ENCODE measurements at regions of chr2 and their contacts with region 1.

Region 1: GRCh38 chr2:127790694-127791529 is 20.1 kb downstream of the WDR33 start:
- DNase-seq: no peak
- ATAC-seq: no peak
- H3K4me3 ChIP-seq: no peak overlapping the region
- H3K4me3 Mint-ChIP-seq: no peak overlapping the region
- H3K27ac ChIP-seq: no peak overlapping the region
- H3K27ac Mint-ChIP-seq: no peak overlapping the region
- H3K4me1 ChIP-seq: peaks cover 0 to 19% of the 10 kb centered on the region in 2 experiments
- H3K4me1 Mint-ChIP-seq: peaks cover 39 to 44% (median 40%) of the 10 kb centered on the region in 3 donors
- H3K27me3 ChIP-seq: no peaks in the 10 kb centered on the region
- H3K27me3 Mint-ChIP-seq: no peaks in the 10 kb centered on the region

Region 2: DNA sequence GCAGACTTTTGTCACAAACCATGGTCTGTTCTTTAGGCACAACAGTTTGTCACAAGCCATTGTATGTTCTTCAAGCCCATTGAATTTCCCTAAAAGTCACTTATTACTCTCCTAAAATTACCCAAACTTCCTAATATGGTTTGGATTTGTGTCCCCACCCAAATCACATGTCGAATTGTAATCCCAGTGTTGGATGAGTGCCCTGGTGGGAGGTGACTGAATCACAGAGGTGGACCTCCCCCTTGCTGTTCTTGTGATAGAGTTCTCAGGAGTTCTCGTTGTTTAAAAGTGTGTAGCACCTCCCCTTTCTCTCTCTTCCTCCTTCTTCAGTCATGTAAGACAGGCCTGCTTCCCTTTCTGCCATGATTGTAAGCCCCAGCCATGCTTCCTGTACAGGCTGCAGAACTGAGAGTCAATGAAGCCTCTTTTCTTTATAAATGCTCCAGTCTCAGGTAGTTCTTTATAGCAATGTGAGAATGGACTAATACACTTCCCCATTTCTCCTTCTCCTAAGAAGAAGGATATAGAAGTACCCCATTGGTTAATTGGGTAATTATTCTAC is 1146.2 kb before region 1 on chr2:
- CTCF ChIA-PET with region 1: no interaction called
- POLR2A ChIA-PET with region 1: no interaction called
- DNase-seq: no peak
- ATAC-seq: peak in 1 of 4 experiments; percentile 38
- H3K4me3 ChIP-seq: no peak overlapping the region
- H3K4me3 Mint-ChIP-seq: no peak overlapping the region
- H3K27ac ChIP-seq: no peak overlapping the region
- H3K27ac Mint-ChIP-seq: peak overlapping the region in 1 of 2 donors; percentile 30
- H3K4me1 ChIP-seq: no peaks in the 10 kb centered on the region
- H3K4me1 Mint-ChIP-seq: peaks cover 3 to 12% (median 7%) of the 10 kb centered on the region in 3 donors
- H3K27me3 ChIP-seq: peaks cover 0 to 5% of the 10 kb centered on the region in 2 experiments
- H3K27me3 Mint-ChIP-seq: no peaks in the 10 kb centered on the region

Region 3: DNA sequence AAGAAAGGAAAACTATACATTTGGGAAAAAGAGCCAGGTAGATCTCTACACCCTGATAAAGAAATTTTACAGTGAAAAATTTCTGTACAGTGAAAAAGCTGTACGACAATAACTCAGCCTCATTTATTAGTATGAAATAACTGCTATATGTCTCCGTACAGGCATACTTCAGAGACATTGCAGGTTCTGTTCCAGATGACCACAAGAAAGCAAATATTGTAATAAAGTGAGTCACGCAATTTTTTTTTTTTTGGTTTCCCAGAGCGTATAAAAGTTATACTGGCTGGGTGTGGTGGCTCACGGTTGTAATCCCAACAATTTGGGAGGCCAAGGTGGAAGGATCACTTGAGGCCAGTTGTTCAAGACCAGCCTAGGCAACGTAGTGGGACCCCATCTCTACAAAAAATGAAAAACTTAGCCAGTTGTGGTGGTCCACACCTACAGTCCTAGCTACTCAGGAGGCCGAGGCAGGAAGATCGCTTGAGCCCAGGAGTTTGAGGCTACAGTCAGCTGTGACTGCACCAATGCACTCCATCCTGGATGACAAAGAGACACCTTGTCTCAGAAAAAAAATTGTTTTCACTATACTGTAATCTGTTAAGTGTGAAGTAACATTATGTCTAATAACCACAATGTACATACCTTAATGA is 123.0 kb after region 1 on chr2:
- CTCF ChIA-PET with region 1: interaction called in 1 of 2 experiments, 10 read pairs
- POLR2A ChIA-PET with region 1: no interaction called
- DNase-seq: no peak
- ATAC-seq: no peak
- H3K4me3 ChIP-seq: no peak overlapping the region
- H3K4me3 Mint-ChIP-seq: no peak overlapping the region
- H3K27ac ChIP-seq: no peak overlapping the region
- H3K27ac Mint-ChIP-seq: no peak overlapping the region
- H3K4me1 ChIP-seq: no peaks in the 10 kb centered on the region
- H3K4me1 Mint-ChIP-seq: no peaks in the 10 kb centered on the region
- H3K27me3 ChIP-seq: no peaks in the 10 kb centered on the region
- H3K27me3 Mint-ChIP-seq: peaks cover 0 to 4% of the 10 kb centered on the region in 2 donors

Region 4: GRCh38 chr2:128178650-128179460 is 387.9 kb after region 1 on chr2:
- CTCF ChIA-PET with region 1: no interaction called
- POLR2A ChIA-PET with region 1: no interaction called
- DNase-seq: peak in 33 of 35 experiments; percentile 10 to 67 (median 35)
- ATAC-seq: peak; percentile 50 to 75 (median 54)
- H3K4me3 ChIP-seq: no peak overlapping the region
- H3K4me3 Mint-ChIP-seq: no peak overlapping the region
- H3K27ac ChIP-seq: no peak overlapping the region
- H3K27ac Mint-ChIP-seq: no peak overlapping the region
- H3K4me1 ChIP-seq: no peaks in the 10 kb centered on the region
- H3K4me1 Mint-ChIP-seq: no peaks in the 10 kb centered on the region
- H3K27me3 ChIP-seq: no peaks in the 10 kb centered on the region
- H3K27me3 Mint-ChIP-seq: no peaks in the 10 kb centered on the region